ENCODE measurements at regions of chr1 and their contacts with region 1.

Region 1: DNA sequence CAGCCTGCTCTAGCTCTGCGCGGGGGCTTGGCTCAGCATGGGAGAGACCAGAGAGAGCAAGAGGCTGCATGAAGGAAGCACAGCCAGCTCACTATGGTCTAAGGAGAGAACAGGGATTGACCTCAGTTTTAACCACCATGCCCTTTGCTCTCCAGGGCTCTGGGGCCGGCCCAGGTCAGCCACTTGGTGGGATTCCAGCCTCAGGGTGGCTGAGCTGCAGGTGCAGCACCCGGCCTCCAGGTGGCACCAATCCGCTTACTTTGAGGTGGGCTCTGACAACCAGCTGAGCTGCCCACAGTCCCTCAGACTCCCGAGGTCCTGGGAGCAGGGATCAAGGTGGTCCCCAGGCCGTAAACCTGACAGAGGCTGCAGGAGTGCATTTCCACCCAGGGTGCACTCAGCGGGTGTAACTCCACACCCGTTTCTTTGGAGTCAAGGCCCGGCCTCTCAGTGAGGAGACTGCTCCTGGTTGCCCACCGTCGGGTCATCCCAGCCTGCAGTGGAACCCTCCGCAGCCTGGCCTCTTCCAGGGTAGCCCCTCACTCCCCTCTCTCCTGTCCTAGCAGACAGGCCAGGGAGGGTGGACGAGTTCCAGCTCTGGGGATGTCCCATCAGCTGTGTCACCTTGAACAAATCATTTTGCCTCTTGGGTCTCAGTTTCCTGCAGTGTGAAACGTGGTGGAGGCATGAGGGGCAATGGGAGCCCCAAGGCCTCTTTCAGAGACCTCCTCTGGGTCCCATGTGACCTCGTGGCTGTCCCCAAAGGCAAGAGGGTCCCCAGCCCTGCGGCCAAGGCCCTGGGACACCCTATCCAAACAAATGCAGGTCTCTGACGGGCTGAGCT is 607 bp upstream of the LGR6 start:
- DNase-seq: peak in 4 of 5 donors; percentile 35 to 51 (median 38)
- H3K4me3 ChIP-seq: no peak overlapping the region
- H3K4me3 Mint-ChIP-seq: no peak overlapping the region
- H3K27ac ChIP-seq: no peak overlapping the region
- H3K27ac Mint-ChIP-seq: no peak overlapping the region
- H3K4me1 ChIP-seq: peaks cover 6% of the 10 kb centered on the region
- H3K4me1 Mint-ChIP-seq: peaks cover 2 to 5% (median 3%) of the 10 kb centered on the region in 4 donors
- H3K27me3 ChIP-seq: peaks cover 14% of the 10 kb centered on the region
- H3K27me3 Mint-ChIP-seq: peaks cover 9 to 21% of the 10 kb centered on the region in 2 donors

Region 2: GRCh38 chr1:202160377-202160940 is 32.5 kb before region 1 on chr1 and contains the start of gene PTPN7:
- CTCF ChIA-PET with region 1: interaction called, 41 read pairs
- POLR2A ChIA-PET with region 1: interaction called, 4 read pairs
- intact Hi-C with region 1: no loop called
- DNase-seq: peak; percentile 73 to 87 (median 78)
- H3K4me3 ChIP-seq: peak within 1 kb of the TSS; percentile 89 to 93
- H3K4me3 Mint-ChIP-seq: peak within 1 kb of the TSS; percentile 92 to 98 (median 96)
- H3K27ac ChIP-seq: peak within 1 kb of the TSS; percentile 93
- H3K27ac Mint-ChIP-seq: peak within 1 kb of the TSS; percentile 94 to 99 (median 99)
- H3K4me1 ChIP-seq: peaks cover 91% of the 10 kb centered on the region
- H3K4me1 Mint-ChIP-seq: peaks cover 55 to 97% (median 75%) of the 10 kb centered on the region in 4 donors
- H3K27me3 ChIP-seq: no peaks in the 10 kb centered on the region
- H3K27me3 Mint-ChIP-seq: no peaks in the 10 kb centered on the region
- total RNA-seq, gene PTPN7: 67.6 to 68.4 TPM

Region 3: GRCh38 chr1:202203238-202204039 is 10.4 kb after region 1 on chr1:
- CTCF ChIA-PET with region 1: interaction called, 10 read pairs
- POLR2A ChIA-PET with region 1: no interaction called
- intact Hi-C with region 1: no loop called
- DNase-seq: no peak
- H3K4me3 ChIP-seq: no peak overlapping the region
- H3K4me3 Mint-ChIP-seq: no peak overlapping the region
- H3K27ac ChIP-seq: no peak overlapping the region
- H3K27ac Mint-ChIP-seq: peak overlapping the region in 1 of 7 donors; percentile 1
- H3K4me1 ChIP-seq: peaks cover 30% of the 10 kb centered on the region
- H3K4me1 Mint-ChIP-seq: peaks cover 11 to 31% (median 13%) of the 10 kb centered on the region in 4 donors
- H3K27me3 ChIP-seq: no peaks in the 10 kb centered on the region
- H3K27me3 Mint-ChIP-seq: no peaks in the 10 kb centered on the region

Region 4: DNA sequence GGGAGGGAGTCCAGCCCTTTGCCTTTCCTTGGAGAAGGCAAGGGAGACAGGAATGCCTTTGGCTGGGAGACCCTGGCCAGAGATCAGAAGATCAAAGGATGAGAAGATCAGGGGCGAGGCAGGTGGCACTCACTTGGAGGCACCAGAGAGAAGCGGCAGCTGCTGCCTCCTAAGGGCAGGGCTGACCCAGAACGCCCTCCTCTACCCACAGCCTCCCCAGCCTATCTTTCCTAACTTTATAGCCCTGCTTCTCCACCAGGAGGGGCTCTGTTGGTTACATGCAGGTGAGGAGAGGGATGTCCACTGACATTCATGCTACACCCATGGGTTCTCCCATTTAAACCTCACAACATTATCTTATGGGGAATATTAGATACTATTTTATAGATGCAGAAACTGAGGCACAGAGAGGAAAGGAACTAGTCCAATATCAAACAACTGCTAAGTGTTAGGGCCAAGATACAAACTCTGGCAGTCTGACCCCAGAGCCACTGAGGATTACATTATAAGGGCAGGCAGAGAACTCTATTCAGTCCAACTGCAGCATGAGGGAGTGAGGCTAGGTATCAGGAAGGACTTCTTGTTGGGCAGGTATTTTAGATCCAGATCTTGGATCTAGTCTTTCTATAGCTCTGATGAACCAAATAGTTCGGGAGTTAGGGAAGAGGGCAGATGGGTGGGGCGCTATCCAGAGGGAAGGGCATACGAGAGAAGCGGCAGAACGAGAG is 20.5 kb after region 1 on chr1:
- CTCF ChIA-PET with region 1: interaction called, 14 read pairs
- POLR2A ChIA-PET with region 1: no interaction called
- intact Hi-C with region 1: no loop called
- DNase-seq: no peak
- H3K4me3 ChIP-seq: no peak overlapping the region
- H3K4me3 Mint-ChIP-seq: peak overlapping the region in 5 of 8 donors; percentile 9 to 68 (median 38)
- H3K27ac ChIP-seq: no peak overlapping the region
- H3K27ac Mint-ChIP-seq: no peak overlapping the region
- H3K4me1 ChIP-seq: no peaks in the 10 kb centered on the region
- H3K4me1 Mint-ChIP-seq: peaks cover 6 to 12% (median 8%) of the 10 kb centered on the region in 4 donors
- H3K27me3 ChIP-seq: peaks cover 25% of the 10 kb centered on the region
- H3K27me3 Mint-ChIP-seq: peaks cover 41 to 46% of the 10 kb centered on the region in 2 donors

Region 5: DNA sequence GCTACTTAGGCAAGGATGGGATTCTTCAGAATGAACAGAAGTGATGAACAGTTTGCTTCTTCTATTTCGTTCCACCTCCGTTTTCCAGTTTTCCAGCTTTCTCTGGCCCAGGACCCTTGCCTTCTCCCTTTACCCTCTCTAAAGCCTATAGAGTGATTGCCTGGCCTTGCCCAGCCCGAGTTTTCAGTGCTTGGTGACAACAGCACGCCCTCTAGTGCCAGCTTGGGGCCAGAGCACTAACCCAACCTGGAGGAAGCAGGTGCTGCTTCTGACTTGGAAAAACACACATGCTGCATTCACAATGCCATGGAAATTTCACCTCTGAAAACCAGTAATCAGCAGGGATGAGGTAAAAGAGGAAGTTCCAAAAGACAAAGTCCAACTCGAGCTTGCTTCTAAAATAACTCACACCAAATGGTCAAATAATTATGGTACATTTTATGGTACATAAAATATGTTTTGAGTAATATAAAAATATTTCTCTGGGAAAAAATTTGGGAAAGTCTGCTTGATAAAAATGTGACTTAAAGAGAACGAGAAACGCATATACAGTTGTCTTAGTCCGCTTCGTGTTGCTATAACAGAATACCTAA is 122.7 kb after region 1 on chr1:
- CTCF ChIA-PET with region 1: interaction called, 52 read pairs
- POLR2A ChIA-PET with region 1: no interaction called
- intact Hi-C with region 1: loop called (anchors 1 kb)
- DNase-seq: peak; percentile 59 to 72 (median 68)
- H3K4me3 ChIP-seq: no peak overlapping the region
- H3K4me3 Mint-ChIP-seq: no peak overlapping the region
- H3K27ac ChIP-seq: no peak overlapping the region
- H3K27ac Mint-ChIP-seq: peak overlapping the region in 2 of 7 donors; percentile 25 to 26
- H3K4me1 ChIP-seq: no peaks in the 10 kb centered on the region
- H3K4me1 Mint-ChIP-seq: peaks cover 0 to 4% (median 0%) of the 10 kb centered on the region in 4 donors
- H3K27me3 ChIP-seq: no peaks in the 10 kb centered on the region
- H3K27me3 Mint-ChIP-seq: peaks cover 0 to 4% of the 10 kb centered on the region in 2 donors

Region 6: GRCh38 chr1:202713110-202713509 is 520.1 kb after region 1 on chr1:
- CTCF ChIA-PET with region 1: interaction called, 43 read pairs
- POLR2A ChIA-PET with region 1: no interaction called
- intact Hi-C with region 1: no loop called
- DNase-seq: no peak
- H3K4me3 ChIP-seq: no peak overlapping the region
- H3K4me3 Mint-ChIP-seq: no peak overlapping the region
- H3K27ac ChIP-seq: no peak overlapping the region
- H3K27ac Mint-ChIP-seq: peak overlapping the region in 1 of 7 donors; percentile 12
- H3K4me1 ChIP-seq: no peaks in the 10 kb centered on the region
- H3K4me1 Mint-ChIP-seq: peaks cover 0 to 5% (median 0%) of the 10 kb centered on the region in 4 donors
- H3K27me3 ChIP-seq: peaks cover 27% of the 10 kb centered on the region
- H3K27me3 Mint-ChIP-seq: peaks cover 32 to 37% of the 10 kb centered on the region in 2 donors

Measured in CD4-positive, alpha-beta memory T cell (primary cell).